ENCODE measurements at regions of chr7 and their contacts with region 1.

Region 1: DNA sequence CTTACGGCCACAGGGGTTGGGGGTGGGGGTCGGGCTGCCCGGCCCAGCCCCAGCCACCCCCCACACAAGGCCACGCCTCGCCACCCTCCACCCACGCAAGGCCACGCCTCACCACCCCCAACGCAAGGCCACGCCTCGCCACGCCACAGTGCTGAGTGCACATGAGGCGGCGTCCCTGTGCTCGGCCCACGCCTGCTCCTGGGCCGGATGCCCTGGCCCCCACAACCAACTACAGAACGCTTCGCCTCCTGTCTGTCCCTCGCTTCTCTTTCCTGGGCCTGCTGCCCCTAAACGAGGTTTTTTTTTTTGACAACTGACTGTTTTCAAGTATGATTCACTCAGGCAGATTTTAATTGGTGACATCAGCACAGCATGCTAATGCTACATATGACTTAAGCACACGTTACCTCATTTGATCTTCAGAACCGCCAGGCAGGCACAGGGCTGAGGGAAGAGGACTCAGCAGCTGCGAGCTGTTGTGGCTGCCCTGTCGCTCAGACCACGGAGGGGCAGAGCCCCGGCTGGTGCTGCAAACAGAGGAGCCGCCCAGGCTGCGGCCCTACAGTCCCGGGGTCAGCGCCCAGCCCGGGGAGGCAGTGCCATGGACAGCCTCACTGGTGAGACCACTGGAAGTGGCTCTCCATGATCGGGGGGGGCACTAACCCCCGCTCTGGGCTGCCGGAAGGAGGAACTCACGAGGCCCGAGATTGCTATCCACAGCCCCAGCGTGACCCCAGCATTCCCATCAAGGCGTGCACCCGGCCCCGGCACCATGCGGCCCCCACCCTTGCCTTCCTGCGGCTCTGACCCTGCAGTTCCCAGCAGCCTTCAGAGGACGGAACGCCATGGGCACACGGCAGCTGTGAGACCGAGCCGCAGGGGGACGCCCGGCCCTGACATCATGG is 212.9 kb downstream of the MAD1L1 start:
- DNase-seq: peak; percentile 38
- H3K4me3 ChIP-seq: no peak overlapping the region
- H3K27ac ChIP-seq: no peak overlapping the region
- H3K4me1 ChIP-seq: peaks cover 14% of the 10 kb centered on the region
- H3K27me3 ChIP-seq: no peaks in the 10 kb centered on the region
- CTCF ChIP-seq: no peak
- POLR2A ChIP-seq: no peak

Region 2: GRCh38 chr7:2065528-2065927 is 45.7 kb after region 1 on chr7:
- CTCF ChIA-PET with region 1: no interaction called
- POLR2A ChIA-PET with region 1: no interaction called
- dilution Hi-C with region 1: no loop called
- intact Hi-C with region 1: loop called (anchors 1 kb)
- DNase-seq: no peak
- H3K4me3 ChIP-seq: no peak overlapping the region
- H3K27ac ChIP-seq: no peak overlapping the region
- H3K4me1 ChIP-seq: peaks cover 6% of the 10 kb centered on the region
- H3K27me3 ChIP-seq: no peaks in the 10 kb centered on the region
- CTCF ChIP-seq: no peak
- POLR2A ChIP-seq: no peak